CD8-positive, alpha-beta T cell (primary cell): ENCODE measurements at regions of chr3 and their contacts with region 1.

Region 1: GRCh38 chr3:130746246-130747039 is at the start of gene PIK3R4:
- DNase-seq: peak; percentile 85 to 99 (median 94)
- ATAC-seq: peak; percentile 80
- H3K4me3 ChIP-seq: peak within 1 kb of the TSS; percentile 75 to 95
- H3K4me3 Mint-ChIP-seq: peak within 1 kb of the TSS; percentile 87
- H3K27ac ChIP-seq: peak within 1 kb of the TSS; percentile 89 to 94
- H3K27ac Mint-ChIP-seq: peak within 1 kb of the TSS; percentile 92
- H3K4me1 ChIP-seq: peaks cover 35% of the 10 kb centered on the region
- H3K4me1 Mint-ChIP-seq: peaks cover 52% of the 10 kb centered on the region
- H3K27me3 ChIP-seq: no peaks in the 10 kb centered on the region
- H3K27me3 Mint-ChIP-seq: no peaks in the 10 kb centered on the region
- CTCF ChIP-seq: no peak
- total RNA-seq, gene PIK3R4: 12.1 to 14.8 TPM

Region 2: GRCh38 chr3:129732200-129732876 is 1014.1 kb before region 1 on chr3:
- CTCF ChIA-PET with region 1: no interaction called
- POLR2A ChIA-PET with region 1: no interaction called
- intact Hi-C with region 1: no loop called
- DNase-seq: no peak
- ATAC-seq: no peak
- H3K4me3 ChIP-seq: no peak overlapping the region
- H3K4me3 Mint-ChIP-seq: no peak overlapping the region
- H3K27ac ChIP-seq: no peak overlapping the region
- H3K27ac Mint-ChIP-seq: no peak overlapping the region
- H3K4me1 ChIP-seq: no peaks in the 10 kb centered on the region
- H3K4me1 Mint-ChIP-seq: no peaks in the 10 kb centered on the region
- H3K27me3 ChIP-seq: no peaks in the 10 kb centered on the region
- H3K27me3 Mint-ChIP-seq: no peaks in the 10 kb centered on the region
- CTCF ChIP-seq: no peak

Region 3: DNA sequence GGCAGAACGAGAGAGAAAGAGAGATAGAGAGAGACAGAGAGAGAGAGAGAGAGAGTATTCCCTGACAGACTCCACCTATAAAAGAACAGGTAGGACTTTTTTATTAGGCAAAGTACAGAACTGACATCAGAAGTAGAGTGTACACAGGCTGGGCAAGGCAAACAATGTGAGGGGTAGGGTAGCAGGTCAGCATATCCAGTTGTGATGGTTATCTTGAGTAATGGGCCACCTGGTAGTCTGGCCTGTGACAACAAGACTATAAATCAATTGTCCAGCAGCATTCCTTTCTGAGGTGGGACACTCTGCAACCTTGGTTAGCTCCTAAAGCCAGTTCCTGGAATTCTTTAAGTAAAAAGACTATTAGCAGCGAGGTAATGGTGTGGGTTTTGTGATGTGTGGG is 838.1 kb before region 1 on chr3:
- CTCF ChIA-PET with region 1: no interaction called
- POLR2A ChIA-PET with region 1: no interaction called
- intact Hi-C with region 1: loop called in 1 of 2 experiments (anchors 5 kb)
- DNase-seq: no peak
- ATAC-seq: no peak
- H3K4me3 ChIP-seq: no peak overlapping the region
- H3K4me3 Mint-ChIP-seq: no peak overlapping the region
- H3K27ac ChIP-seq: no peak overlapping the region
- H3K27ac Mint-ChIP-seq: no peak overlapping the region
- H3K4me1 ChIP-seq: no peaks in the 10 kb centered on the region
- H3K4me1 Mint-ChIP-seq: no peaks in the 10 kb centered on the region
- H3K27me3 ChIP-seq: no peaks in the 10 kb centered on the region
- H3K27me3 Mint-ChIP-seq: no peaks in the 10 kb centered on the region
- CTCF ChIP-seq: no peak

Region 4: GRCh38 chr3:130773366-130773765 is 26.9 kb after region 1 on chr3:
- CTCF ChIA-PET with region 1: no interaction called
- POLR2A ChIA-PET with region 1: no interaction called
- intact Hi-C with region 1: loop called in 1 of 2 experiments (anchors 1 kb)
- DNase-seq: no peak
- ATAC-seq: no peak
- H3K4me3 ChIP-seq: no peak overlapping the region
- H3K4me3 Mint-ChIP-seq: no peak overlapping the region
- H3K27ac ChIP-seq: no peak overlapping the region
- H3K27ac Mint-ChIP-seq: no peak overlapping the region
- H3K4me1 ChIP-seq: no peaks in the 10 kb centered on the region
- H3K4me1 Mint-ChIP-seq: no peaks in the 10 kb centered on the region
- H3K27me3 ChIP-seq: peaks cover 0 to 3% of the 10 kb centered on the region in 2 experiments
- H3K27me3 Mint-ChIP-seq: peaks cover 7% of the 10 kb centered on the region
- CTCF ChIP-seq: no peak

Region 5: GRCh38 chr3:131026321-131027178 is 280.1 kb after region 1 on chr3 and contains the starts of genes ASTE1 and NEK11:
- CTCF ChIA-PET with region 1: no interaction called
- POLR2A ChIA-PET with region 1: no interaction called
- intact Hi-C with region 1: loop called (anchors 1 to 5 kb)
- DNase-seq: peak; percentile 88 to 95 (median 92)
- ATAC-seq: peak; percentile 96
- H3K4me3 ChIP-seq: peak within 1 kb of the TSS; percentile 90 to 97
- H3K4me3 Mint-ChIP-seq: peak within 1 kb of the TSS; percentile 94
- H3K27ac ChIP-seq: peak within 1 kb of the TSS; percentile 91 to 96
- H3K27ac Mint-ChIP-seq: peak within 1 kb of the TSS; percentile 99
- H3K4me1 ChIP-seq: peaks cover 49% of the 10 kb centered on the region
- H3K4me1 Mint-ChIP-seq: peaks cover 52% of the 10 kb centered on the region
- H3K27me3 ChIP-seq: no peaks in the 10 kb centered on the region
- H3K27me3 Mint-ChIP-seq: no peaks in the 10 kb centered on the region
- CTCF ChIP-seq: no peak
- total RNA-seq, gene ASTE1: 24.6 to 25.9 TPM
- total RNA-seq, gene NEK11: 3.6 to 3.8 TPM

Region 6: DNA sequence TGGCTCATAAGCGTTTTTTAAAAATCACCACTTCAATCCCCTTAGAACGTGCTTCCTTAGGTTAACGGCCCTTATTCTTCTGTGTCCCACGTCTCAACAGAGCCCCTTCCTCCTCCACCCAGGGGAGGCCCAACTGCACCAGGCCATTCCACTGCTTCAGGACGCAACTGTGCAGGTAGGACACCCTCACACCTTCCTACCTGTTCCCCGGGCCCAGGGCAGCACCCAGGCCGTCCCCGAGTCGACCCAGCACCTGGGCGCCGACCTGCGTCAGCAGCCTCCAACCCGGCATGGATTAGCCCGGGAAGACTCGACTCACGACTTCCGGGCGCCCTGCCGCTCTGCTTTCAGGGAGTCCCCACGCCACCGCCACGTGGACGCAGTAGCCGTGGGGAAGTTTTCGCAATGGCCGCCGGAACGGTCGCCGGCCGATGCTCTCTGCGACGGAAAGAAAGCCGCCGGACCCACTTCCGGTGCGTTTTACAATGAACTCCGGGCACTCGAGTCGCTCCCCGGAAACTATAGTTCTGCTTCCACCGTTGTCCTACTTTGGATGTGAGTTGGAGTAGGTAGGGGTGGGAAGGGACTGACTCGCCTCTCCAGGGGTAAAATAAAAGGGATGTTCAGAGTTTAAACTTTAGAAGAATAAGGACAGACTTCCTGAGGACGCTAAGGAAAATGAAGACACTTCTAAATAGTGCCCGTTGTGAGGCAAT is 756.2 kb after region 1 on chr3 and contains the start of gene MRPL3:
- CTCF ChIA-PET with region 1: no interaction called
- POLR2A ChIA-PET with region 1: no interaction called
- intact Hi-C with region 1: loop called (anchors 2 to 5 kb)
- DNase-seq: peak; percentile 67 to 92 (median 84)
- ATAC-seq: peak; percentile 88
- H3K4me3 ChIP-seq: peak within 1 kb of the TSS; percentile 74 to 95
- H3K4me3 Mint-ChIP-seq: peak within 1 kb of the TSS; percentile 97
- H3K27ac ChIP-seq: peak within 1 kb of the TSS; percentile 78 to 83
- H3K27ac Mint-ChIP-seq: peak within 1 kb of the TSS; percentile 95
- H3K4me1 ChIP-seq: peaks cover 27% of the 10 kb centered on the region
- H3K4me1 Mint-ChIP-seq: peaks cover 45% of the 10 kb centered on the region
- H3K27me3 ChIP-seq: no peaks in the 10 kb centered on the region
- H3K27me3 Mint-ChIP-seq: no peaks in the 10 kb centered on the region
- CTCF ChIP-seq: no peak
- total RNA-seq, gene MRPL3: 43.6 to 45.0 TPM